Gastrocnemius medialis (tissue), 4 donors: ENCODE measurements at regions of chr15 and their contacts with region 1.

Region 1: GRCh38 chr15:92617549-92618520 is 37.7 kb downstream of the FAM174B start:
- DNase-seq: peak; percentile 76 to 84
- ATAC-seq: peak; percentile 73 to 75
- H3K4me3 ChIP-seq: peak overlapping the region in 2 of 4 donors; percentile 5 to 10
- H3K27ac ChIP-seq: peak overlapping the region; percentile 68 to 92 (median 80)
- H3K4me1 ChIP-seq: peaks cover 37 to 47% of the 10 kb centered on the region in 2 donors
- H3K27me3 ChIP-seq: no peaks in the 10 kb centered on the region
- CTCF ChIP-seq: no peak
- POLR2A ChIP-seq: peak in 1 of 2 donors; percentile 30

Region 2: DNA sequence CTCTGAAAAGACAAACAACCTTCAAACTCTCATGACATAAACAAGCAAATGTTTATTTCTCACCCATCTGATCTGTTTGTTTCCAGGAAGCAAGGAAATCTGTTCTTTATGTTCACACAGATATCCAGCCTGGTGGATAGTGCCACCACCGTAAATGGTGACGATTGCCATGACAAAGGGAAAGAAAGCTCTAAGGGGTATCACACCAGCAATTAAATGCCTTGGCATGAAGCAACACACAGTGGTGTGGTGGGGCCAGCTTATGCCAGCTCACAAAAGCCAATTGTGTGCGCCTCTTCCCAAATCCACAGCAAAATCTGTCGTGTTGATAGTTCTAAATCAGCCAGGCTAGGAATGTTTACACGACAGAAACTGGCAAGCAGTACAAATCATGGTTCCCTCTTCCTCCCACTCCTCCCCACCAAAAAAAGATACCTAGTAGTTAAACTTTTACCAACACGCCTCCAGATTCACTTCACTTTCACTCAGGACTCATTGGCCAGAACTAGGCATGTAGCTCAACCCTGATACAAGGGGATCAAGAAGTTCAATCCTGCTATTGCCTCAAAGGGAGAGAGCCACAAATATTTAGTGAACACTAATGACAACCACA is 953.5 kb before region 1 on chr15:
- in situ Hi-C with region 1: no loop called
- intact Hi-C with region 1: no loop called
- DNase-seq: no peak
- ATAC-seq: no peak
- H3K4me3 ChIP-seq: no peak overlapping the region
- H3K27ac ChIP-seq: no peak overlapping the region
- H3K4me1 ChIP-seq: no peaks in the 10 kb centered on the region
- H3K27me3 ChIP-seq: no peaks in the 10 kb centered on the region
- CTCF ChIP-seq: no peak
- POLR2A ChIP-seq: no peak

Region 3: DNA sequence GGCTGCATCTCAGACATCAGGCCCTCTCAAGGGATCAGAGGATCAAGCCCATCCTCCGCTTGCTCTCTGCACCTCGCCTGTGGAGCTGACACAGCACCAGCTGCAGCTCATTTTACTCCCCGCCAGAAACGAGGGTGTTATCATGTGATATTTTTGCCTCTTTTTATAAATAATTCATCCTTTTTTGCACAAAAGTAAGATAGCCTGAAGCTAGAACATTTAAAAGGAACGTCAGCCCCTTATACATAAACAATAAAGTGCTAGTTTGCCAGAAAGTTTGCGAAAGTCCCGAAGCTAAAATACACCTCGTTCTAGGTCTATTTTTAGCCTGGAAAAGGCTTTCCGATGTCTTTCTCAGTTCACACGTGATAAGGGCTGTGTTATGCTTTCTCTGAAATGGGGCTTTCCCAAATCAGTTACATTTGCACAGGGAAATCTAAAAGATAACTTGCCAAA is 47.3 kb after region 1 on chr15:
- in situ Hi-C with region 1: loop called in 1 of 4 experiments (anchors 10 kb)
- intact Hi-C with region 1: no loop called
- DNase-seq: no peak
- ATAC-seq: peak; percentile 94 to 96
- H3K4me3 ChIP-seq: peak overlapping the region in 3 of 4 donors; percentile 13 to 31 (median 22)
- H3K27ac ChIP-seq: peak overlapping the region in 3 of 4 donors; percentile 68 to 74 (median 70)
- H3K4me1 ChIP-seq: peaks cover 15 to 26% of the 10 kb centered on the region in 2 donors
- H3K27me3 ChIP-seq: no peaks in the 10 kb centered on the region
- CTCF ChIP-seq: no peak
- POLR2A ChIP-seq: no peak

Region 4: GRCh38 chr15:92683232-92683834 is 65.5 kb after region 1 on chr15:
- in situ Hi-C with region 1: no loop called
- intact Hi-C with region 1: loop called (anchors 5 kb)
- DNase-seq: peak in 1 of 2 donors; percentile 46
- ATAC-seq: peak; percentile 61 to 80
- H3K4me3 ChIP-seq: no peak overlapping the region
- H3K27ac ChIP-seq: peak overlapping the region in 1 of 4 donors; percentile 42
- H3K4me1 ChIP-seq: no peaks in the 10 kb centered on the region
- H3K27me3 ChIP-seq: no peaks in the 10 kb centered on the region
- CTCF ChIP-seq: peak; percentile 42 to 78 (median 75)
- POLR2A ChIP-seq: no peak